ENCODE measurements at regions of chr19 and their contacts with region 1.

Region 1: GRCh38 chr19:680287-681028 is 4.3 kb downstream of the FSTL3 start:
- DNase-seq: peak; percentile 99 to 100
- ATAC-seq: peak; percentile 93
- H3K4me3 ChIP-seq: peak overlapping the region; percentile 60 to 73
- H3K27ac ChIP-seq: peak overlapping the region; percentile 51 to 52
- H3K4me1 ChIP-seq: no peaks in the 10 kb centered on the region
- H3K27me3 ChIP-seq: no peaks in the 10 kb centered on the region

Region 2: DNA sequence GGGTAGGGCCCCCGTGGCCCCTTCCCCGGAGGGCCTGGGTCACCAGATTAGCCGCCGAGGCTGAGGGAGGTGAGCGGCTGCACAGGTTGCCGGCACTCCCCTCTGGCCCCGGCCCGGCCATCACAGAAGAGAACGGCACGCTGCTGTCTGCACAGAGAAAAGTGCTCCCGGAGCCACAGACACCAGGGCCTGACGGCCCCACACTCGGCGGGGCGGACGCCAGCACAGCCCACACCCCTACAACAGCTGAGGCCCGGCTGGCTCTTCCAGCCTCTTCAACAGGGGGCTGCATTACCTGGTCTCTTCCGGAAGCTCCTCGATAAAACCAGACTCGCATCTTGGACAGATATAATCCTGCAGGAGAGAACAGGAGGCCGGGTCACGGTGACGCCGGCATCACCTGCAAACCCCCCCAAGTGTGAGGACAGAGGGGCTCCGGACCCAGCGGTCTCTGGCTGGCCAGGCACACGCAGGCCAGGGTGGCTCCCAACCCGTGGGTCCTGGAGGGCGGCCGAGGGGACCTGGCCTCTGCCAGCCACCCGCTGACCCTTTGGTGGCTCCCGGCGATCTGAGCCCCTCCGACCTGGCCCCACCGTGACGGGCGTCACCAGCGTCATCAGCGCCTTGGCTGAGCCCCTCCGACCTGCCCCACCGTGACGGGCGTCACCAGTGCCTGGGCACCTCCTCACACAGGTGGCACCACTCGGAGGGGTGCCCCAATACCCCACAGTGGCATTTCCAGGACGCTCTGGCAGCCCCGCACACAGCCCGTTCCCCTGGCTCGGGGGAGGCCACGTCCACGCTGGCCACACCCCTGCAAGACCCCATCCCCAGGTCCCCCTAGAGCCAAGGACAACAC is 27.7 kb before region 1 on chr19:
- intact Hi-C with region 1: no loop called
- DNase-seq: no peak
- ATAC-seq: peak; percentile 3
- H3K4me3 ChIP-seq: no peak overlapping the region
- H3K27ac ChIP-seq: no peak overlapping the region
- H3K4me1 ChIP-seq: no peaks in the 10 kb centered on the region
- H3K27me3 ChIP-seq: no peaks in the 10 kb centered on the region

Region 3: GRCh38 chr19:796692-797527 is 116.5 kb after region 1 on chr19 and contains the start of gene PTBP1:
- intact Hi-C with region 1: loop called in 1 of 2 experiments (anchors 5 kb)
- DNase-seq: peak; percentile 100
- ATAC-seq: peak; percentile 95
- H3K4me3 ChIP-seq: peak within 1 kb of the TSS; percentile 91 to 96
- H3K27ac ChIP-seq: peak within 1 kb of the TSS in 1 of 2 donors; percentile 79
- H3K4me1 ChIP-seq: peaks cover 3% of the 10 kb centered on the region in 2 donors
- H3K27me3 ChIP-seq: no peaks in the 10 kb centered on the region
- total RNA-seq, gene PTBP1: 192 to 218 TPM